ENCODE measurements at regions of chr14 and their contacts with region 1.

Region 1: GRCh38 chr14:97410667-97411620 is 613.8 kb downstream of the VRK1 start:
- DNase-seq: no peak
- H3K4me3 ChIP-seq: peak overlapping the region in 5 of 59 donors; percentile 15 to 20 (median 17)
- H3K27ac ChIP-seq: peak overlapping the region in 1 of 59 donors; percentile 45
- H3K27me3 ChIP-seq: peaks cover 0 to 65% (median 33%) of the 10 kb centered on the region in 45 donors
- CTCF ChIP-seq: peak in 37 of 56 donors; percentile 9 to 56 (median 30)

Region 2: DNA sequence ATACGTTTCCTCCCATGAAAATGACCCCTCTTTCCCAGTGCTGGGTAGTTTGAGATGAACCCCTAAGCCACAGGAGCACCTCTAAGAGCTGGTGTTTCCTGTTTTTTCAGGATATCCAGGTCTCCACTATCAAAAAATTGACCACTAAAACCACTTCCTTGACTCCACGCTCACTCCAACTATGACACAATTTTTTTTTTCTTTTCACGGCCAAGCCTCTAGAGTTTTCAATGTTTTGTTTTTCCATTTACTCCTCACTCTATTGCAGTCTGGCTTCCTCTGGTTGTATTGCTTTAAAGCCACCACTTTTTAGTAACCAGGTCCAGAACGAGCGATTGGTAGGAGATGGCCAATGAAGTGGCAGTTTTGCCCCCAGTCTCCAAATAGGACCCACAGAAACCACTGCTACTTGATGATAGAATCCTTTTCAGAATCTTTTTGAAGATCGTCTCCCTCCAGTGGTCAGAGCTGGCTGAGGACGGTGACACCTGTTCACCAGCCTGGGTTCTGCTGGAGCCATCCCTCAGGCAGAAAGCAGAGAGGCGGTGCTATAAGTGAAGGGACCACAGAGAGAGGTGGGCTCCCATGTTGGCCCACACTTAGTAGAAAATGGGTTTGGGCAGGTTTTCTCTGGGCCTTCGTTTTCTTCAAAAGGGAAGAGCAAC is 159.3 kb before region 1 on chr14:
- intact Hi-C with region 1: no loop called
- DNase-seq: no peak
- H3K4me3 ChIP-seq: no peak overlapping the region
- H3K27ac ChIP-seq: no peak overlapping the region
- H3K27me3 ChIP-seq: peaks cover 0 to 18% (median 0%) of the 10 kb centered on the region in 45 donors
- CTCF ChIP-seq: no peak

Region 3: GRCh38 chr14:97299661-97300060 is 111.3 kb before region 1 on chr14:
- intact Hi-C with region 1: loop called in 1 of 2 experiments (anchors 5 kb)
- DNase-seq: no peak
- H3K4me3 ChIP-seq: no peak overlapping the region
- H3K27ac ChIP-seq: no peak overlapping the region
- H3K27me3 ChIP-seq: peaks cover 0 to 64% (median 37%) of the 10 kb centered on the region in 45 donors
- CTCF ChIP-seq: peak in 35 of 56 donors; percentile 10 to 62 (median 28)

Region 4: DNA sequence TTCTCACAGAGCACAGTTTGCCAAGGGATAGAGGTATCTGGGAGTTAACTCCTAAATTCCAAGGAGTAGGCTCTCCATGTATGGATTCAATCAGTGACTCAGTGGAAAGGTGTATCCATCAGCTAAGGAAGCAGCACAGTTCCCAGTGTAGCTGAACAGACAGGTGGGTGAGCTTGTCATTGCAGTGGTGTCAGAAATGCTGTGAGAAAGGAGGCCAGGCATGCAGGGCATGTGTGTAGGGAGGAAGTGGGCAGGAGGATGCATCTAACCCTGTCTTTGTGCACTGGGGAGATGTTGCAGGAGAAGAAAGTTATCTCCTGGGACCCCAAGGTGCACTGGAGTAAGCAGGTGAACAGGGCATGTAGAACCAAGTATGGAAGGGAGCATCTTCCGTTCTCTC is 74.8 kb before region 1 on chr14:
- intact Hi-C with region 1: loop called in 1 of 2 experiments (anchors 5 kb)
- DNase-seq: no peak
- H3K4me3 ChIP-seq: no peak overlapping the region
- H3K27ac ChIP-seq: peak overlapping the region in 35 of 59 donors; percentile 5 to 83 (median 56)
- H3K27me3 ChIP-seq: peaks cover 0 to 7% (median 0%) of the 10 kb centered on the region in 45 donors
- CTCF ChIP-seq: no peak

Region 5: DNA sequence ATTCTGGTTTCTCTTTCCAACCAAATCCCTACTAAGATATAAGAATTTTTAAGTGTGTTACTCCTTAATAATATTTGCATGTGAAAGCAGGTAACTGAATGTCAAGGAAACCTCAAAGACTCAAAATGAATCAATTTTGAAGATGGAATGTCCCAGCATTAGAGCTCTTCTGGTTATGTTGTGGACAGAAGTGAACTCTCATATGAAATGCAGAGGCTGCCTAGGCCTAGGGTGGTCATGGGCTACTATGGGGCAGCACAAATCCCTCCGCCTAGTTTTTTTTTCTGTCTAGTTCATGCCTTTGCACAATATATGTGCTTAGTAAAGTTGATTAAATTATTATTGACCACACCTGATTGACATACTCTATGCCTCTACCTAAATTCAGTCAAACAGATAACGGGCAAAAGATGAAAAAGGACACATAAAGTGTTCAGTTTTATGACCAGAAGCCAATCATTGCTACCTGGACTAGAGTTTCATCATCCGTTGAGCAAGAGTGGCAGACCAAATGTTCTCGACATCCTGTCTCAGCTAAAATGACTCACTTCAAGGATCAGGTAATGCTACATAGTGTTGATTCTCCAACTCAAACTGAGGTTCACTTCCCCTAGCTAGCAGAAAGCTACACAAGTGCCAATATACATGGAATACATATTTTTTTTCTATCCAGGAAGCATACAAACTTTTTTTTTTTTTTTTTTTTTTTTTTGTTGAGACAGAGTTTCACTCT is 597.6 kb after region 1 on chr14:
- intact Hi-C with region 1: no loop called
- DNase-seq: no peak
- H3K4me3 ChIP-seq: no peak overlapping the region
- H3K27ac ChIP-seq: no peak overlapping the region
- H3K27me3 ChIP-seq: peaks cover 0 to 7% (median 0%) of the 10 kb centered on the region in 45 donors
- CTCF ChIP-seq: no peak